Esophagus muscularis mucosa (tissue), 4 donors: ENCODE measurements at regions of chr7 and their contacts with region 1.

Region 1: GRCh38 chr7:158704704-158705468 is at the start of gene NCAPG2:
- DNase-seq: peak; percentile 99
- H3K4me3 ChIP-seq: peak within 1 kb of the TSS; percentile 75 to 92 (median 84)
- H3K27ac ChIP-seq: peak within 1 kb of the TSS; percentile 87 to 89 (median 88)
- H3K4me1 ChIP-seq: peaks cover 7 to 23% (median 21%) of the 10 kb centered on the region in 4 donors
- H3K27me3 ChIP-seq: no peaks in the 10 kb centered on the region
- CTCF ChIP-seq: peak; percentile 30 to 52 (median 49)
- EP300 ChIP-seq: no peak
- POLR2A ChIP-seq: peak; percentile 82
- total RNA-seq, gene NCAPG2: 4.2 to 6.2 (median 4.4) TPM

Region 2: GRCh38 chr7:158595069-158595468 is 109.8 kb before region 1 on chr7:
- intact Hi-C with region 1: no loop called
- DNase-seq: peak; percentile 97
- H3K4me3 ChIP-seq: no peak overlapping the region
- H3K27ac ChIP-seq: no peak overlapping the region
- H3K4me1 ChIP-seq: no peaks in the 10 kb centered on the region
- H3K27me3 ChIP-seq: no peaks in the 10 kb centered on the region
- CTCF ChIP-seq: no peak
- EP300 ChIP-seq: no peak
- POLR2A ChIP-seq: no peak

Region 3: GRCh38 chr7:158863611-158864506 is 159.0 kb after region 1 on chr7:
- intact Hi-C with region 1: loop called (anchors 10 kb)
- DNase-seq: no peak
- H3K4me3 ChIP-seq: peak overlapping the region; percentile 63 to 73 (median 64)
- H3K27ac ChIP-seq: peak overlapping the region; percentile 86 to 93 (median 88)
- H3K4me1 ChIP-seq: peaks cover 27 to 61% (median 33%) of the 10 kb centered on the region in 4 donors
- H3K27me3 ChIP-seq: no peaks in the 10 kb centered on the region
- CTCF ChIP-seq: no peak
- EP300 ChIP-seq: peak; percentile 46
- POLR2A ChIP-seq: no peak

Region 4: GRCh38 chr7:159061674-159062212 is 356.9 kb after region 1 on chr7:
- intact Hi-C with region 1: no loop called
- DNase-seq: peak; percentile 86
- H3K4me3 ChIP-seq: no peak overlapping the region
- H3K27ac ChIP-seq: no peak overlapping the region
- H3K4me1 ChIP-seq: peaks cover 0 to 4% (median 1%) of the 10 kb centered on the region in 4 donors
- H3K27me3 ChIP-seq: peaks cover 0 to 5% (median 0%) of the 10 kb centered on the region in 4 donors
- CTCF ChIP-seq: no peak
- EP300 ChIP-seq: no peak
- POLR2A ChIP-seq: no peak